GM10248 (cell line): ENCODE measurements at regions of chr19 and their contacts with region 1.

Region 1: DNA sequence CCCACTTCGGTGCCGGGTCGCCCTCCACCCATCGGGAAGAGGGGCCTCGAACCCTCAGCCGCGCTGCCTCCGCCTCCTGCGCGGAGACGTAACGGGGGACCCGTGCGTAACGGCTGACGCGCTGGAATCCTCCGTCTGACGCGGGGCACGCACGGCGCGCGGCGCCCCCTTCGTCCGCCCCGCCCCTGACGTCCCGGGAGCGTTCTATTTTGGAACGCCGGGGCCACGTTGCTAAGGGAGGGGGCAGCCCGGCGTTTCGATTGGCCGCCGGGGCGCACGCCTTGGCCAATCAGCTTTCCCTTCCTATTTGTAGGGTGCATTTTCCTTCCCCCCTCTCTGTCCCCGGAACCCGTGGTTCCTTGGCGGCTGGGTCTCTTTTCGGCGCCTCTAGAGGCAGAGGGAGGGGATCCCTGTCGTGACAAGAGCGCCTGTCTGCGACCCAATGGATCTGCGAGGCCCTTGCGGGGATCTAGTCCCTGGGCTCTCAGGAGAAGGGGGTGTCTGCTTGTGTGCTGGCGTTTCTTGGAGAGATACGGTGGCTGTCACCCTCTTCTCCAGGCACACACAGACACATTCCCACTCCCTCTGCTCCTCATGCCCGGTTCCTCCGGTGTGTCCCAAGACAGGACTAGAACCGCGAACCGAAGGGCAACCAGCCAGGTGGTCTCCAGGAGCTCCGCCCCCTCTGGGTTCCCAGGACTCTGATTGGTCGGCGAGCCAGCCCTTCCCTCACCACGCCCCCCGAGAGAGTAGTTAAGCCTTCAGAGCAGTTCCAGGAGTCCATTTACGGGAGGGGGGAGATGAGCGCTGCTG is 1.5 kb downstream of the FOSB start:
- DNase-seq: peak; percentile 95
- CTCF ChIP-seq: no peak

Region 2: DNA sequence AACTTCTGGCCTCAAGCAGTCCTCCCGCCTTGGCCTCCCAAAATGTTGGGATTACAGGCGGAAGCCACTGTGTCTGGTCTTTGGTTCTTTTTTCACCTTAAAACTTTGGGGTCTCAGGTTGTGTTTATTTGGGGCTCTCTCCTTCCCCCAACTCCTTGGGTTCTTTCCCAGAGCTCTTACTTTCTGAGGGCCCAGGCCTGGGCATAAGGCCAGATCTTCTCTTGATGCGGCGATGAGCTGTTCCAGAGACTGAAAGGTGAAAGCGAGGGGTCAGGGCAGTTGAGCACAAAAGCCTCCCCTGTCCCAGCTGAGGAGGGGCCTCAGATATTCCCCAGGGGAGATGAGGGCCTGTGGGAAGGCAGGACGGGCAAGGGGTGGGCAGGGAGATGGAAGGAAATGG is 55.8 kb before region 1 on chr19:
- CTCF ChIA-PET with region 1: no interaction called
- POLR2A ChIA-PET with region 1: interaction called, 10 read pairs
- DNase-seq: no peak
- CTCF ChIP-seq: no peak

Region 3: GRCh38 chr19:45455707-45456499 is 13.4 kb before region 1 on chr19:
- CTCF ChIA-PET with region 1: interaction called, 5 read pairs
- POLR2A ChIA-PET with region 1: interaction called, 48 read pairs
- DNase-seq: peak; percentile 81
- CTCF ChIP-seq: no peak